CD8-positive, alpha-beta memory T cell (primary cell): ENCODE measurements at regions of chr20 and their contacts with region 1.

Region 1: DNA sequence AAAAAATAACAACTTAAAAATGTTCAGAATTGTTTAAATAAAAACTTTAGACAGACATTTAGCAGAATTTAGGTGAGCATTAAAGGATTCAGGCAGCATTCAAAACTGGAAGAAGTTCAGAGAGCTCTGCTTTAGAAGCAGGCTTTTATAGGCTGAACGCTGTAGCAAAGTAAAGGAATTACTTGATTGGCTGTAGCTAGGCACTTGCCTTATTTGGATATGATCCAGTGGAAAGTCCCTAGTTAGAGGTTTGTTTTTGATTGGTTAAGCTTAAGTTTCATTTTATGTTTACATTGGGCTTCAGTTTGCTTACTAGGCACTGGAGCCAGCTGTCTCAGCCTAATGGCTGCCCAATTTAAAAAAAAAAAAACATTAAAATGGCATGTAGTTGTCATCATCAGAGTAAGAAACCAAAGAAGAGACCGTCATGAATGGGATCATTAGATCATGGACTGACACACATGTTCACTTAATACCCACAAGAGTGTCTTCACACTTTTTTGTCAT is 65.1 kb downstream of the CBFA2T2 start:
- DNase-seq: peak; percentile 17 to 90 (median 72)
- H3K4me3 ChIP-seq: peak overlapping the region; percentile 31
- H3K4me3 Mint-ChIP-seq: peak overlapping the region; percentile 49 to 81 (median 70)
- H3K27ac ChIP-seq: peak overlapping the region; percentile 68
- H3K27ac Mint-ChIP-seq: peak overlapping the region; percentile 98 to 99 (median 98)
- H3K4me1 ChIP-seq: peaks cover 20% of the 10 kb centered on the region
- H3K4me1 Mint-ChIP-seq: peaks cover 18 to 41% (median 33%) of the 10 kb centered on the region in 3 donors
- H3K27me3 ChIP-seq: no peaks in the 10 kb centered on the region
- H3K27me3 Mint-ChIP-seq: no peaks in the 10 kb centered on the region

Region 2: GRCh38 chr20:33351696-33352095 is 203.3 kb before region 1 on chr20:
- CTCF ChIA-PET with region 1: no interaction called
- POLR2A ChIA-PET with region 1: no interaction called
- DNase-seq: no peak
- H3K4me3 ChIP-seq: no peak overlapping the region
- H3K4me3 Mint-ChIP-seq: no peak overlapping the region
- H3K27ac ChIP-seq: no peak overlapping the region
- H3K27ac Mint-ChIP-seq: peak overlapping the region in 7 of 8 donors; percentile 70 to 97 (median 82)
- H3K4me1 ChIP-seq: no peaks in the 10 kb centered on the region
- H3K4me1 Mint-ChIP-seq: peaks cover 0 to 11% (median 5%) of the 10 kb centered on the region in 3 donors
- H3K27me3 ChIP-seq: no peaks in the 10 kb centered on the region
- H3K27me3 Mint-ChIP-seq: no peaks in the 10 kb centered on the region

Region 3: DNA sequence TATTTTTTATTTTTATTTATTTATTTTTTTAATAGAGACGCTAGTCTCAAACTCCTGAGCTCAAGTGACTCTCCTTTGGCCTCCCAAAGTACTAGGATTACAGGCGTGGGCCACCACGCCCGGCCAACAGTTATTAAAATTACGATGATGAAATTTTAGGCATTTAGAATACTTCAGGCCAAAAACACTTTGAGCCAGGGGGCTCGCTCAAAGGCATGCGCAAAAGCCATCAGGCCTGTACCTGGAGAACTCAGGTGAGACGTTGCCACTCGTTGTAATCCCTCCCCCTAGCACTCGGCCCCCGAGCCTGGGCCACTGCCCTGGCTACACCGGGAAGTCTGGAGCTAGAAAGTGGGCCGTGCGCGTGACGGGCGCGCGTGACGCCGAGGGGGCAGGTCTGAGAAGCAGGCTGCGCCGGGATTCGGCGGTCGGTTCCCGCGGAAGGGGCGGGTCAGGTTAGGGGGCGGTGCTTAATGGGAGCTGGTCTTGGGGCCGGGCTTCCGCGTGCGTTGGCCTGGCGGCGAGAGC is 65.4 kb before region 1 on chr20:
- CTCF ChIA-PET with region 1: interaction called, 6 read pairs
- POLR2A ChIA-PET with region 1: interaction called, 14 read pairs
- DNase-seq: peak; percentile 99
- H3K4me3 ChIP-seq: peak overlapping the region; percentile 68
- H3K4me3 Mint-ChIP-seq: peak overlapping the region; percentile 83 to 95 (median 91)
- H3K27ac ChIP-seq: peak overlapping the region; percentile 88
- H3K27ac Mint-ChIP-seq: peak overlapping the region; percentile 91 to 97 (median 94)
- H3K4me1 ChIP-seq: peaks cover 10% of the 10 kb centered on the region
- H3K4me1 Mint-ChIP-seq: peaks cover 13 to 34% (median 19%) of the 10 kb centered on the region in 3 donors
- H3K27me3 ChIP-seq: no peaks in the 10 kb centered on the region
- H3K27me3 Mint-ChIP-seq: peaks cover 0 to 2% of the 10 kb centered on the region in 2 donors

Region 4: GRCh38 chr20:33604084-33604990 is 49.4 kb after region 1 on chr20:
- CTCF ChIA-PET with region 1: no interaction called
- POLR2A ChIA-PET with region 1: interaction called, 14 read pairs
- DNase-seq: no peak
- H3K4me3 ChIP-seq: no peak overlapping the region
- H3K4me3 Mint-ChIP-seq: no peak overlapping the region
- H3K27ac ChIP-seq: no peak overlapping the region
- H3K27ac Mint-ChIP-seq: no peak overlapping the region
- H3K4me1 ChIP-seq: no peaks in the 10 kb centered on the region
- H3K4me1 Mint-ChIP-seq: peaks cover 15 to 24% (median 23%) of the 10 kb centered on the region in 3 donors
- H3K27me3 ChIP-seq: no peaks in the 10 kb centered on the region
- H3K27me3 Mint-ChIP-seq: no peaks in the 10 kb centered on the region